CD4-positive, alpha-beta T cell (primary cell): ENCODE measurements at regions of chr3 and their contacts with region 1.

Region 1: DNA sequence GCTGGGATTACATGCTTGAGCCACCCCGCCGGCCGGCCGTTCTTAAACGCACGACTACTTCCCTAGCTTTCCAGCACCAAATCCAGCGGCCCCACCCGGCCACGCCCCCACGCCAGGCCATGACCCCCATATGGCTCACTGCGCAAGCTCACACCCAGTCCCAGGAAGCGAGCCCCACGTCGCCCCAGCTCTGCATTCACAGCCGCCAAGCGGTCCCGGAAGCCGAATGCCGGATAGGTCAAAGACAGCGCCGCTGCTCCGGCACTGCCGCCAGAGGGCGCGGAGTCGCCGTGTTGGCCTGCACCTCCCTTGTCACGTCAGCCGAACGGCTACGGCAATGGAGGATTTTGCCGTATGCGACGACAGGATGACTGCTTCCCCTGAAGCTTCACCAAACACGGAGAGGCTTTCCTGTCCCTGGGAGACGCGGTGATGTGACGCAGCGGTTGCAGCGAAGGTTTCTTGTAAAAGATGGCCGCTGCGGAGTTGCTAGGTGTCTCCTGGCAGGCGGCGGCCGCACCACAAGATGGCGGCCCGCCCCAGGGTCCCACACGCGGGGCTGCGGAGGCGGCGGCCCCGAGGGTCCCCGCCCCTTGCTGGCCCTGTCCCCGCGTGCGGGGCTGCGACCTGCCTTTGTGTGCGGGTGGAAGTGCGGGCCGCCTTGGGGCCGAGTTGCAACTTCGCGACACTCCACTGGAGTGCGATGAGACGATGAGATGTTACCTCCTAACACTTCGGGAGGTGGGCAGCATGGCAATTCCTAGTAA is 30.2 kb upstream of the RPN1 start:
- DNase-seq: peak; percentile 94 to 100 (median 97)
- ATAC-seq: peak; percentile 85
- H3K4me3 ChIP-seq: peak overlapping the region; percentile 70
- H3K4me3 Mint-ChIP-seq: peak overlapping the region; percentile 97
- H3K27ac ChIP-seq: peak overlapping the region; percentile 88 to 96
- H3K27ac Mint-ChIP-seq: peak overlapping the region; percentile 94
- H3K4me1 ChIP-seq: peaks cover 34% of the 10 kb centered on the region
- H3K4me1 Mint-ChIP-seq: peaks cover 40% of the 10 kb centered on the region
- H3K27me3 ChIP-seq: no peaks in the 10 kb centered on the region
- H3K27me3 Mint-ChIP-seq: no peaks in the 10 kb centered on the region
- CTCF ChIP-seq: peak; percentile 92

Region 2: GRCh38 chr3:128572644-128573105 is 108.1 kb before region 1 on chr3:
- CTCF ChIA-PET with region 1: no interaction called
- POLR2A ChIA-PET with region 1: no interaction called
- intact Hi-C with region 1: no loop called
- DNase-seq: peak in 4 of 14 experiments; percentile 18 to 52 (median 38)
- ATAC-seq: peak; percentile 51
- H3K4me3 ChIP-seq: no peak overlapping the region
- H3K4me3 Mint-ChIP-seq: no peak overlapping the region
- H3K27ac ChIP-seq: no peak overlapping the region
- H3K27ac Mint-ChIP-seq: no peak overlapping the region
- H3K4me1 ChIP-seq: peaks cover 17% of the 10 kb centered on the region
- H3K4me1 Mint-ChIP-seq: peaks cover 13% of the 10 kb centered on the region
- H3K27me3 ChIP-seq: peaks cover 3 to 17% of the 10 kb centered on the region in 2 experiments
- H3K27me3 Mint-ChIP-seq: peaks cover 35% of the 10 kb centered on the region
- CTCF ChIP-seq: no peak

Region 3: DNA sequence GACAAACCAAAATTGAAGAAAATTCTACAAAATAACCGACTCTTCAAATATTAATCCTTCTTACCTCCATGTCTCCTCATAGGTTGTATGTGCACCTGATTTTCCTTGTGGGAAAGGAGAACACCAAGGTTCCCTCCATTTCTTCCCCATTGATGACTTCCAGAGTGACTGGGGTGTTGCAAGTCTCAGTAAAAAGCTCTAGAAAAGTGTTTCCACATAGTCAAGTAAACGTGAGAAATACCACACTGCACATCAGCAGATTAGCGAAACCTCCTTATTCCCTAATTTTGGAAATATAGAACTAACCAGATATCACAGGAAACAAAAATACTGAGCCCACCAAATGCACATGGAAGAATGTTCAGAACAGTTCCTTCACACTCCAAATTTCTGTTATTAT is 25.3 kb before region 1 on chr3:
- CTCF ChIA-PET with region 1: interaction called, 13 read pairs
- POLR2A ChIA-PET with region 1: interaction called, 41 read pairs
- intact Hi-C with region 1: loop called (anchors 2 kb)
- DNase-seq: no peak
- ATAC-seq: no peak
- H3K4me3 ChIP-seq: no peak overlapping the region
- H3K4me3 Mint-ChIP-seq: peak overlapping the region; percentile 87
- H3K27ac ChIP-seq: no peak overlapping the region
- H3K27ac Mint-ChIP-seq: no peak overlapping the region
- H3K4me1 ChIP-seq: peaks cover 16% of the 10 kb centered on the region
- H3K4me1 Mint-ChIP-seq: peaks cover 20% of the 10 kb centered on the region
- H3K27me3 ChIP-seq: no peaks in the 10 kb centered on the region
- H3K27me3 Mint-ChIP-seq: no peaks in the 10 kb centered on the region
- CTCF ChIP-seq: no peak

Region 4: GRCh38 chr3:128714887-128715491 is 34.2 kb after region 1 on chr3:
- CTCF ChIA-PET with region 1: interaction called, 7 read pairs
- POLR2A ChIA-PET with region 1: interaction called, 17 read pairs
- intact Hi-C with region 1: no loop called
- DNase-seq: peak in 8 of 14 experiments; percentile 4 to 76 (median 38)
- ATAC-seq: peak; percentile 88
- H3K4me3 ChIP-seq: no peak overlapping the region
- H3K4me3 Mint-ChIP-seq: no peak overlapping the region
- H3K27ac ChIP-seq: peak overlapping the region in 1 of 2 donors; percentile 20
- H3K27ac Mint-ChIP-seq: peak overlapping the region; percentile 80
- H3K4me1 ChIP-seq: peaks cover 23% of the 10 kb centered on the region
- H3K4me1 Mint-ChIP-seq: peaks cover 25% of the 10 kb centered on the region
- H3K27me3 ChIP-seq: no peaks in the 10 kb centered on the region
- H3K27me3 Mint-ChIP-seq: no peaks in the 10 kb centered on the region
- CTCF ChIP-seq: no peak

Region 5: GRCh38 chr3:128794770-128795649 is 114.2 kb after region 1 on chr3:
- CTCF ChIA-PET with region 1: interaction called, 31 read pairs
- POLR2A ChIA-PET with region 1: interaction called, 83 read pairs
- intact Hi-C with region 1: loop called (anchors 1 to 2 kb)
- DNase-seq: peak; percentile 42 to 86 (median 54)
- ATAC-seq: peak; percentile 98
- H3K4me3 ChIP-seq: no peak overlapping the region
- H3K4me3 Mint-ChIP-seq: peak overlapping the region; percentile 31
- H3K27ac ChIP-seq: peak overlapping the region in 1 of 2 donors; percentile 8
- H3K27ac Mint-ChIP-seq: peak overlapping the region; percentile 79
- H3K4me1 ChIP-seq: peaks cover 44% of the 10 kb centered on the region
- H3K4me1 Mint-ChIP-seq: peaks cover 58% of the 10 kb centered on the region
- H3K27me3 ChIP-seq: no peaks in the 10 kb centered on the region
- H3K27me3 Mint-ChIP-seq: no peaks in the 10 kb centered on the region
- CTCF ChIP-seq: peak; percentile 77

Region 6: GRCh38 chr3:128879125-128879969 is 198.6 kb after region 1 on chr3 and contains the start of gene ACAD9:
- CTCF ChIA-PET with region 1: interaction called, 17 read pairs
- POLR2A ChIA-PET with region 1: interaction called, 43 read pairs
- intact Hi-C with region 1: loop called in 1 of 2 experiments (anchors 1 kb)
- DNase-seq: peak; percentile 92 to 99 (median 96)
- ATAC-seq: peak; percentile 87
- H3K4me3 ChIP-seq: peak within 1 kb of the TSS; percentile 94
- H3K4me3 Mint-ChIP-seq: peak within 1 kb of the TSS; percentile 88
- H3K27ac ChIP-seq: peak within 1 kb of the TSS; percentile 91 to 99
- H3K27ac Mint-ChIP-seq: peak within 1 kb of the TSS; percentile 92
- H3K4me1 ChIP-seq: peaks cover 56% of the 10 kb centered on the region
- H3K4me1 Mint-ChIP-seq: peaks cover 74% of the 10 kb centered on the region
- H3K27me3 ChIP-seq: no peaks in the 10 kb centered on the region
- H3K27me3 Mint-ChIP-seq: no peaks in the 10 kb centered on the region
- CTCF ChIP-seq: no peak
- total RNA-seq, gene ACAD9: 64.8 to 71.6 TPM

Region 7: DNA sequence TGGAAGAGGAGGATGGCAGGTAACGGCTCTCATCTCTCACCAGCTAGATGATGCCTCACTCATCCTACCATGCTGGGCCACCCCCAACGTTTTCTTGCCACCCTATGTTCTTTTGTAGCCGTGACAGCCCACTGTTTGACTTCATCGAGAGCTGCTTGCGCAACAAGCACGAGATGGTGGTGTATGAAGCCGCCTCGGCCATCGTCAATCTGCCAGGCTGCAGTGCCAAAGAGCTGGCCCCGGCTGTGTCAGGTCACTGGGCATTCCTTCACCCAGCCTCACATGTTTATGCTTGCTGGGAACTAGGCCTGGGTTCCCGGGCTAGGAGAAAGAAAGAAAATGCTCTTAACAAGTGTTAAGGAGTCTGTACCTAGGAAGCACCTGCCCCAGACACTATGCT is 576.8 kb after region 1 on chr3:
- CTCF ChIA-PET with region 1: no interaction called
- POLR2A ChIA-PET with region 1: no interaction called
- intact Hi-C with region 1: no loop called
- DNase-seq: no peak
- ATAC-seq: no peak
- H3K4me3 ChIP-seq: no peak overlapping the region
- H3K4me3 Mint-ChIP-seq: no peak overlapping the region
- H3K27ac ChIP-seq: no peak overlapping the region
- H3K27ac Mint-ChIP-seq: no peak overlapping the region
- H3K4me1 ChIP-seq: peaks cover 4% of the 10 kb centered on the region
- H3K4me1 Mint-ChIP-seq: peaks cover 7% of the 10 kb centered on the region
- H3K27me3 ChIP-seq: no peaks in the 10 kb centered on the region
- H3K27me3 Mint-ChIP-seq: no peaks in the 10 kb centered on the region
- CTCF ChIP-seq: no peak

Region 8: GRCh38 chr3:129316131-129317013 is 635.6 kb after region 1 on chr3:
- CTCF ChIA-PET with region 1: no interaction called
- POLR2A ChIA-PET with region 1: interaction called, 11 read pairs
- intact Hi-C with region 1: no loop called
- DNase-seq: peak; percentile 82 to 94 (median 91)
- ATAC-seq: peak; percentile 41
- H3K4me3 ChIP-seq: peak overlapping the region; percentile 92
- H3K4me3 Mint-ChIP-seq: peak overlapping the region; percentile 96
- H3K27ac ChIP-seq: peak overlapping the region; percentile 15 to 67
- H3K27ac Mint-ChIP-seq: peak overlapping the region; percentile 82
- H3K4me1 ChIP-seq: peaks cover 32% of the 10 kb centered on the region
- H3K4me1 Mint-ChIP-seq: peaks cover 28% of the 10 kb centered on the region
- H3K27me3 ChIP-seq: no peaks in the 10 kb centered on the region
- H3K27me3 Mint-ChIP-seq: no peaks in the 10 kb centered on the region
- CTCF ChIP-seq: peak; percentile 80